ENCODE measurements at regions of chr3 and their contacts with region 1.

Region 1: DNA sequence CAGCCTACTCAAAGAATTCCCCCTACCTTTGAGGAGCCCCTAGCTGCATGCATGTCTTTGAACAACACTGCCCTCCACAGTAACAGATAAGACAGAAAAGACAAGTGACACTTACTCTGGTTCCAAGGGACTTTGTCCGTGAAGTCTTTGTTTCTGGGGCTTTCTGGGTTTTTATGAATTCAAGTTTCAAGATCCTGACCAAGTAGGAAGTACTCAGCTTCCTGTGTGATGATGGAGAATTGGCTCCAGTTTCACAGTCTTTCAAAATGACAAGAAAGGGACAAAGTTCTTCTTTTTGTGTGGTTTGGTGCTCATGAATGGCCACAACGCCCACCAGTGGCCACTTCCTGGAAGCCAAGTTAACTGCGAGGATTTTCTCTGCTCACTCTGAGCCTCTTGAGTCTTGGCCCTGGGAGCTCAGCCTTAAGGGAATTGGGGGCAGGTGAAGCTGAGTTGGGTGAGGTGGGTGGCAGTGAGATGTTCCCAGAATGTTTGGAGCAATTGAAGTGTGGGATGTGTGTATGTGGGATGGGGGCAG is at the start of gene CCR1:
- DNase-seq: peak; percentile 92
- ATAC-seq: peak; percentile 86
- H3K4me3 ChIP-seq: peak within 1 kb of the TSS; percentile 28; the same call in 1 of the 2 replicates
- H3K27ac ChIP-seq: peak within 1 kb of the TSS; percentile 51
- H3K4me1 ChIP-seq: peaks cover 33% of the 10 kb centered on the region
- H3K27me3 ChIP-seq: no peaks in the 10 kb centered on the region
- CTCF ChIP-seq: peak; percentile 66 to 86 (median 75)
- EP300 ChIP-seq: peak; percentile 65 to 82; a peak in 3 of 4 replicates
- POLR2A ChIP-seq: no peak
- RAD21 ChIP-seq: peak; percentile 87
- polyA plus RNA-seq, gene CCR1: 3.4 to 3.7 TPM

Region 2: GRCh38 chr3:45593708-45594609 is 614.3 kb before region 1 on chr3:
- CTCF ChIA-PET with region 1: no interaction called
- POLR2A ChIA-PET with region 1: no interaction called
- RAD21 ChIA-PET with region 1: no interaction called
- SMC1A ChIA-PET with region 1: no interaction called
- in situ Hi-C with region 1: no loop called
- intact Hi-C with region 1: loop called (anchors 5 kb)
- DNase-seq: no peak
- ATAC-seq: peak; percentile 81
- H3K4me3 ChIP-seq: peak overlapping the region; percentile 81
- H3K27ac ChIP-seq: peak overlapping the region; percentile 89
- H3K4me1 ChIP-seq: peaks cover 18% of the 10 kb centered on the region
- H3K27me3 ChIP-seq: no peaks in the 10 kb centered on the region
- CTCF ChIP-seq: no peak
- EP300 ChIP-seq: no peak
- POLR2A ChIP-seq: peak; percentile 85
- RAD21 ChIP-seq: no peak

Region 3: GRCh38 chr3:46013316-46014094 is 194.7 kb before region 1 on chr3:
- CTCF ChIA-PET with region 1: no interaction called
- POLR2A ChIA-PET with region 1: no interaction called
- RAD21 ChIA-PET with region 1: no interaction called
- SMC1A ChIA-PET with region 1: no interaction called
- in situ Hi-C with region 1: no loop called
- intact Hi-C with region 1: no loop called
- DNase-seq: no peak
- ATAC-seq: 0 out of 3 replicates have a peak, but pooled peaks have one; percentile 21
- H3K4me3 ChIP-seq: no peak overlapping the region
- H3K27ac ChIP-seq: no peak overlapping the region
- H3K4me1 ChIP-seq: peaks cover 3% of the 10 kb centered on the region
- H3K27me3 ChIP-seq: no peaks in the 10 kb centered on the region
- CTCF ChIP-seq: no peak
- EP300 ChIP-seq: no peak
- POLR2A ChIP-seq: no peak
- RAD21 ChIP-seq: no peak

Region 4: GRCh38 chr3:46065294-46065721 is 142.9 kb before region 1 on chr3:
- CTCF ChIA-PET with region 1: interaction called, 4 read pairs
- POLR2A ChIA-PET with region 1: no interaction called
- RAD21 ChIA-PET with region 1: interaction called, 5 read pairs
- SMC1A ChIA-PET with region 1: interaction called, 11 read pairs
- in situ Hi-C with region 1: no loop called
- intact Hi-C with region 1: no loop called
- DNase-seq: peak; percentile 56
- ATAC-seq: peak; percentile 96
- H3K4me3 ChIP-seq: no peak overlapping the region
- H3K27ac ChIP-seq: no peak overlapping the region
- H3K4me1 ChIP-seq: peaks cover 19% of the 10 kb centered on the region
- H3K27me3 ChIP-seq: no peaks in the 10 kb centered on the region
- CTCF ChIP-seq: no peak
- EP300 ChIP-seq: peak in 1 of 2 experiments; percentile 59; a peak in 2 of 4 replicates
- POLR2A ChIP-seq: no peak
- RAD21 ChIP-seq: peak; percentile 0; the same call in 1 of the 2 replicates

Region 5: DNA sequence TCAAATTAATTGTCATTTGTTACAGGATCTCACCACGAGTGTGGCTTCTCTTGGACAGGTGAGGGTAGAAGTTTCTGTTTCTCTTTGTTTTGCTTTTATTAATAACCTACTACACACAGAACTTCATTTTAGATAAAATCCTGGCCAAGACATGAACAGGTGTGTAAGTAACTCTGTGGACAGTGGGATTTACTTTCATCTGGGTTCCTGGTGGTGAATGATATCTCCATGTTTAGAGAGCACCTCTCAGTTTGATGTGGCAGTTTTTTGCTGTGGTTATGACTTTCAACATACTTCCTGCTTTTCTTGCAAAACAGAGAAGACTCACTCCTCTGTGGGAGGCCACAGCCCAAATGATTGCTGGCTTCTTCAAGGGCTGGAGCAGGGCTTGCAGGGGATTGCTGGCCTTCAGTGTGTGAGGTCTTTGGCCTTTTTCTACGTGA is 109.9 kb before region 1 on chr3:
- CTCF ChIA-PET with region 1: interaction called, 396 read pairs
- POLR2A ChIA-PET with region 1: interaction called, 18 read pairs
- RAD21 ChIA-PET with region 1: interaction called, 268 read pairs
- SMC1A ChIA-PET with region 1: interaction called, 342 read pairs
- in situ Hi-C with region 1: loop called (anchors 5 kb)
- intact Hi-C with region 1: loop called (anchors 2 kb)
- DNase-seq: peak; percentile 86
- ATAC-seq: peak; percentile 78
- H3K4me3 ChIP-seq: 0 out of 2 replicates have a peak overlapping the region, but pooled peaks have one; percentile 29
- H3K27ac ChIP-seq: peak overlapping the region; percentile 94
- H3K4me1 ChIP-seq: peaks cover 60% of the 10 kb centered on the region
- H3K27me3 ChIP-seq: no peaks in the 10 kb centered on the region
- CTCF ChIP-seq: no peak
- EP300 ChIP-seq: peak; percentile 64 to 81; a peak in 3 of 4 replicates
- POLR2A ChIP-seq: peak; percentile 53; the same call in 1 of the 2 replicates
- RAD21 ChIP-seq: no peak

Region 6: GRCh38 chr3:46110701-46111493 is 97.3 kb before region 1 on chr3:
- CTCF ChIA-PET with region 1: interaction called, 21 read pairs
- POLR2A ChIA-PET with region 1: interaction called, 4 read pairs
- RAD21 ChIA-PET with region 1: interaction called, 13 read pairs
- SMC1A ChIA-PET with region 1: interaction called, 10 read pairs
- in situ Hi-C with region 1: no loop called
- intact Hi-C with region 1: no loop called
- DNase-seq: peak; percentile 97
- ATAC-seq: peak; percentile 95
- H3K4me3 ChIP-seq: peak overlapping the region; percentile 39; the same call in 1 of the 2 replicates
- H3K27ac ChIP-seq: peak overlapping the region; percentile 99
- H3K4me1 ChIP-seq: peaks cover 40% of the 10 kb centered on the region
- H3K27me3 ChIP-seq: no peaks in the 10 kb centered on the region
- CTCF ChIP-seq: no peak
- EP300 ChIP-seq: no peak; a peak in 1 of 4 replicates
- POLR2A ChIP-seq: peak; percentile 84
- RAD21 ChIP-seq: no peak

Region 7: GRCh38 chr3:46193436-46193835 is 14.8 kb before region 1 on chr3:
- CTCF ChIA-PET with region 1: interaction called, 71 read pairs
- POLR2A ChIA-PET with region 1: interaction called, 10 read pairs
- RAD21 ChIA-PET with region 1: interaction called, 51 read pairs
- SMC1A ChIA-PET with region 1: interaction called, 103 read pairs
- in situ Hi-C with region 1: no loop called
- intact Hi-C with region 1: no loop called
- DNase-seq: no peak
- ATAC-seq: no peak
- H3K4me3 ChIP-seq: no peak overlapping the region
- H3K27ac ChIP-seq: no peak overlapping the region
- H3K4me1 ChIP-seq: peaks cover 10% of the 10 kb centered on the region
- H3K27me3 ChIP-seq: no peaks in the 10 kb centered on the region; a peak in 1 of 4 replicates
- CTCF ChIP-seq: no peak
- EP300 ChIP-seq: no peak
- POLR2A ChIP-seq: no peak
- RAD21 ChIP-seq: no peak

Measured in GM12878 (cell line).